Endothelial cell of umbilical vein (primary cell): ENCODE measurements at regions of chr11 and their contacts with region 1.

Region 1: DNA sequence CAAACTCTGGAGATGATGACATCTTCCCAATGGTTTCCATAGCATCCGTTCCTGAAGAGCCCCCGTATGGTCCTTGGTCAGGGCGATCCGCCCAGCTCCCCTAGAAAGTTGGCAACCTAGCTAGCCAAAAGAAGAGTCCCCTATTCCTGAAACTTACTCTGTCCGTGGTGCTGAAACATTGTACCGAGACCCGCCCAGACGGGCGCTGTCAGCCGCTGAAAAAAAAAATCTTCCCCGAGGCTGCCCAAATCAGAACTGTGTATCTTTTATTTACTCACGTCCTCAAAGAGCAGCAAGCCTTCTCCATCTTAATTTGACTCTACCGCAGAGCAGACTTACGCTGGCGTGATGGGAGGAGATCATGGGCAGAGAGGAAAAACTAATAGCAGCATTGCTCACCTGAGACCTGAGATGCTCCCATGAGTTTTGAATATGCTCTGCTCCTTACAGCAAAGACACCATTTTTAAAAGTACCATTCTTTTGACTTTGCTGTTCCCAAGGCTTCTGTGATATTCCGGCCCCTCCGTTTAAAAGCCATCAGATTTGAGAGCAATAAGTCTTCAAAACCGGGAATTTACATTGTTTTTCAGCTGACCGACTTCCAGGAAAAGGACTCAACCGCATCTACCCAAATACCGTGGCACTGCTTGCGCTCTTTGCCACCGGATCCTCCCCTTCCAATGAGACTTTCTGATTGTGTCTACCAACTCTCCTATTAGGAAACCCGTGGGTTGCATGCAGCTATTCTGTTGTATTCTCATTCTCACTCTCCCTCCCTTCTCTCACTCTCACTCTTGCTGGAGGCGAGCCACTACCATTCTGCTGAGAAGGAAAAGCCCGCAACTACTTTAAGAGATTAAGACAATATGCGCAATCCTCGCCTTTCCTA is at the start of gene SLC17A6:
- DNase-seq: peak; percentile 13
- H3K4me3 ChIP-seq: no peak within 1 kb of the TSS
- H3K27ac ChIP-seq: no peak within 1 kb of the TSS
- H3K4me1 ChIP-seq: no peaks in the 10 kb centered on the region
- H3K27me3 ChIP-seq: peaks cover 39 to 60% of the 10 kb centered on the region in 2 experiments
- CTCF ChIP-seq: no peak
- POLR2A ChIP-seq: no peak
- total RNA-seq, gene SLC17A6: not detected in 2 replicates

Region 2: DNA sequence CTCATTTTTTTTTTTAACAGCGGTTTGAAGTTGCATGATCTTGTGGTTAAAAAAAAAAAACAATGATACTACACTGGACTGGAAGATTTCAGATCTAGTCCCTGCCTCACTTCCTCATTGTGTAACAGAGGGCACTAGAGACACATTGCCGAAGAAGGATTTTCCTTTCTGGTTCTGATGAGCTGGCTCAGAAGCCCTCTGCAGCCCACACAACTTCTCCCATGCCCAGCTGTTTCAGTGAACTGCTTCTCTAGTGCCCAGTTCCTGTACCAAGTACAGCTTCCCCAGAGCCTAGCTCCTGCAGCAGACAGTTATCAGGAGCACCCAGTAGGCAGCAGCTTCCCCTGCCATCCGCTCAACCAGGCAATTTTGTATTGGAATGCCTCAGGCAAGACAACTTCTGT is 174.4 kb before region 1 on chr11:
- CTCF ChIA-PET with region 1: no interaction called
- POLR2A ChIA-PET with region 1: no interaction called
- dilution Hi-C with region 1: no loop called
- intact Hi-C with region 1: no loop called
- DNase-seq: no peak
- H3K4me3 ChIP-seq: no peak overlapping the region
- H3K27ac ChIP-seq: no peak overlapping the region
- H3K4me1 ChIP-seq: no peaks in the 10 kb centered on the region
- H3K27me3 ChIP-seq: no peaks in the 10 kb centered on the region
- CTCF ChIP-seq: no peak
- POLR2A ChIP-seq: no peak

Region 3: GRCh38 chr11:22472306-22472705 is 134.5 kb after region 1 on chr11:
- CTCF ChIA-PET with region 1: interaction called, 3 read pairs
- POLR2A ChIA-PET with region 1: no interaction called
- dilution Hi-C with region 1: no loop called
- intact Hi-C with region 1: loop called (anchors 2 kb)
- DNase-seq: peak; percentile 15
- H3K4me3 ChIP-seq: no peak overlapping the region
- H3K27ac ChIP-seq: no peak overlapping the region
- H3K4me1 ChIP-seq: no peaks in the 10 kb centered on the region
- H3K27me3 ChIP-seq: peaks cover 0 to 3% of the 10 kb centered on the region in 2 experiments
- CTCF ChIP-seq: peak in 1 of 2 donors; percentile 15
- POLR2A ChIP-seq: no peak

Region 4: GRCh38 chr11:22539821-22540256 is 202.0 kb after region 1 on chr11:
- CTCF ChIA-PET with region 1: interaction called, 29 read pairs
- POLR2A ChIA-PET with region 1: no interaction called
- dilution Hi-C with region 1: no loop called
- intact Hi-C with region 1: loop called (anchors 1 kb)
- DNase-seq: peak; percentile 29
- H3K4me3 ChIP-seq: no peak overlapping the region
- H3K27ac ChIP-seq: no peak overlapping the region
- H3K4me1 ChIP-seq: no peaks in the 10 kb centered on the region
- H3K27me3 ChIP-seq: peaks cover 2% of the 10 kb centered on the region in 2 experiments
- CTCF ChIP-seq: peak; percentile 16 to 38
- POLR2A ChIP-seq: no peak

Region 5: DNA sequence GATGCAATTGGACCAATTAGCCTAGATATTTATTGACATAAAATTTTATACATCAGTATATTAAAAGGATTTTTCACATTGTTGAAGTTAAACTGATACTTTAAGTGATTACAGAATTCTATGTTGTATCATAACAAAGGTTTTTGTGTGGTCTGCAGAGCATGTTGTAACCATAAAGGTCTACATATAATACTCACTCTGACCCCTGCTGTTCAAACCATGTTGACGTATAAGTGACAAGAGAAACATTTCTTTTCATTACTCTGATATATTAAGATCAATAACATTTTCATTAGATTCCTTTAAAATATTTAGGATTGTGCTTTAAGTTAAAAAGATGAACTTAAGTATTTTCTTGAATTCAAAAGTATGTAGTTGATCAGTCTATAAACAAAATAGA is 392.5 kb after region 1 on chr11:
- CTCF ChIA-PET with region 1: no interaction called
- POLR2A ChIA-PET with region 1: no interaction called
- dilution Hi-C with region 1: no loop called
- intact Hi-C with region 1: loop called (anchors 2 kb)
- DNase-seq: peak; percentile 39
- H3K4me3 ChIP-seq: no peak overlapping the region
- H3K27ac ChIP-seq: no peak overlapping the region
- H3K4me1 ChIP-seq: peaks cover 10% of the 10 kb centered on the region
- H3K27me3 ChIP-seq: no peaks in the 10 kb centered on the region
- CTCF ChIP-seq: no peak
- POLR2A ChIP-seq: no peak